ENCODE measurements at regions of chr9 and their contacts with region 1.

Region 1: DNA sequence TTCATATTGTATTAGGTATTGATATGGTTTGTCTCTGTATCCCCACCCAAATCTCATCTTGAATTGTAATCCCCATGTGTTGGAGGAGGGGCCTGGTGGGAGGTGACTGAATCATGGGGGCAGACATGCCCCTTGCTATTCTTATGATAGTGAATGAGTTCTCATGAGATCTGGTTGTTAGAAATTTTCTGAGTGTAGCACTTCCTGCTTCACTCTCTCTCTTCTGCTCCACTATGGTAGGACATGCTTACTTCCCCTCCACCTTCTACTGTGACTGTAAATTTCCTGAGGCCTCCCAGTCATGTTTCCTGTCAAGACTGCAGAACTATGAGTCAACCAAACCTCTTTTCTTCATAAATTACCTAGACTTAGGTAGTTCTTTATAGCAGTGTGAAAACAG is 187.4 kb upstream of the SLC24A2 start:
- DNase-seq: no peak
- ATAC-seq: no peak

Region 2: GRCh38 chr9:19271076-19271475 is 705.1 kb before region 1 on chr9:
- intact Hi-C with region 1: no loop called
- DNase-seq: no peak
- ATAC-seq: no peak

Region 3: DNA sequence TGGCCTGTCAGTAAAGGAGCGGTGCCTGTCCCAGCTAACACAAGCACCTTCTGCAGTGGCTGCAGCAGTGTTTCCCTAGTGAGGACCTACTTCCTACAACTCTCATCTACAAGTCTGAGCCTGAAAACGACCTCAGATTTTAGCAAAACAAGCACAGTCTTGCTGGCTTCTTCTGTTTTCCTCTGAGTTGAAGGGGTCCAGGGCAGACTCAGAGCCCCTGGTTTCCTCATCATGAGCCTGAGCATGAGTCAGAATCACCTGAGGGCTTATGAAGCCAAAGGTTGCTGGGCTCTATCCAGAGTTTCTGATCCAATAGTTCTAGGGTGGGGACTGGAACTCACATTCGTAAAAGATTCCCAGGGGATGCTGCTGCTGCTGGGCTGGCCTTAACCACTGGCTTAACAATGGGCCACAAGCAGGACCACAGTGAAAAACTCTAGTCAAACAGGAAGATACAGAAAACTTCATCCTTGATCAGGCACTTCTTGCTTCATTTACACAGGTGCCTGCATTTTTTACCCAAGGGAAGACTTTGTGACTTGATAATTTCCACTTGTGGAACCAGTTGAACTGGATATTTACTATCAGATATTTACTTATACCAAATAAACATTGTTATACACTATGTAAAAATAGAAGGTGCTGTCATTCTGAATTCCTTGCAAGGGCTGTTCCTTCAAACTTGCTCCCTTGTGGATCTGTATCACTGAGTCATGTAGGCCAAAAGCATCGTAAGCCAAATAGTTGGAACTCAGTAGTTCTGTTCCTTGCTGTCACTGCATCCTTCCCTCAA is 571.7 kb before region 1 on chr9:
- intact Hi-C with region 1: no loop called
- DNase-seq: no peak
- ATAC-seq: no peak

Region 4: GRCh38 chr9:20032413-20033006 is 56.3 kb after region 1 on chr9:
- intact Hi-C with region 1: loop called (anchors 5 kb)
- DNase-seq: no peak
- ATAC-seq: peak; percentile 58

Measured in left ventricle myocardium superior (tissue), 1 donor.